ENCODE measurements at regions of chrX and their contacts with region 1.

Region 1: DNA sequence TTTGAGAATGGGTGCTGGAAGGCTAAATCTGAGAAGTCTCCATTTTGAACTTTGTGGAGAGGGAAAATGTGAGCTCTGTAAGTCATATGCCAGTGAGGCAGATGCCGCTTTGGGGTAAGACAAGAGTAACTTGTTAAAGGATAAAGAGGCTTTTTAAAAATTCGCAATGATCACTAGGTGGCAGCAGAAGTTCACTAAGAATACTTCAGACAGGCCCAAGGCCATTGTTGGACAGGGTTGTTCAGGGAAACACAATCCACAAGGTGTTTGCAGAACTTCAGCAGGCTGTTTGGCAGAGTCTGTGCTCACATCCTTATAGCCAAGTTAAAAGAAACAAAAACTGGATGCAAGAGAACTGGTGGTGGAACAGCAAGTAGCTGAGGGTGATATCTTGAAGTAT is 13.7 kb upstream of the PIGA start:
- DNase-seq: peak; percentile 26
- ATAC-seq: no peak
- H3K4me3 Mint-ChIP-seq: no peak overlapping the region
- H3K27ac Mint-ChIP-seq: no peak overlapping the region
- H3K4me1 Mint-ChIP-seq: no peaks in the 10 kb centered on the region
- H3K27me3 Mint-ChIP-seq: peaks cover under 1% of the 10 kb centered on the region

Region 2: DNA sequence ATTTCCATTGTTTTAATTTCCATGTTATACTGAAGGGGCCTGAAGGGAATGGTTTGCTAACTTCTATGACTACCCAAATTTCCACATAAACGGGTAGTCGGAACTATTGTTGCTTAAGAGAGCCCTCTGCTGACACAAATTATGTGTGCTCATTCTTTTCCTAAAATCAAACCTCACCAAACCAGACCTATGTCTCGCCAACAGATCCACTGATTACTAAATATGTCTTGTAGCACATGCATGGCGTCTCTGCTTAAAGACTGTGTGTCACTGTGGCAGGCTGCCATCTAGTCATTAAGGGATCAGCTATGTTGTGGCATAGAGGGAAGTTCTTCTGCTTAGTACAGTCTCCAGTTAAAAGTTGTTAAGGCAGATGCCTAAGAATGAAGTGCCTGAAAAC is 119.0 kb after region 1 on chrX:
- CTCF ChIA-PET with region 1: interaction called, 20 read pairs
- POLR2A ChIA-PET with region 1: no interaction called
- DNase-seq: no peak
- ATAC-seq: no peak
- H3K4me3 Mint-ChIP-seq: no peak overlapping the region
- H3K27ac Mint-ChIP-seq: no peak overlapping the region
- H3K4me1 Mint-ChIP-seq: no peaks in the 10 kb centered on the region
- H3K27me3 Mint-ChIP-seq: peaks cover 9% of the 10 kb centered on the region

Measured in activated CD8-positive, alpha-beta T cell treated with anti-CD3 and anti-CD28 coated beads, Interleukin-2, amount 10 ng/mL, durations not matched to agents 7 days and 5 days (primary cell).